ENCODE measurements at regions of chr2 and their contacts with region 1.

Region 1: DNA sequence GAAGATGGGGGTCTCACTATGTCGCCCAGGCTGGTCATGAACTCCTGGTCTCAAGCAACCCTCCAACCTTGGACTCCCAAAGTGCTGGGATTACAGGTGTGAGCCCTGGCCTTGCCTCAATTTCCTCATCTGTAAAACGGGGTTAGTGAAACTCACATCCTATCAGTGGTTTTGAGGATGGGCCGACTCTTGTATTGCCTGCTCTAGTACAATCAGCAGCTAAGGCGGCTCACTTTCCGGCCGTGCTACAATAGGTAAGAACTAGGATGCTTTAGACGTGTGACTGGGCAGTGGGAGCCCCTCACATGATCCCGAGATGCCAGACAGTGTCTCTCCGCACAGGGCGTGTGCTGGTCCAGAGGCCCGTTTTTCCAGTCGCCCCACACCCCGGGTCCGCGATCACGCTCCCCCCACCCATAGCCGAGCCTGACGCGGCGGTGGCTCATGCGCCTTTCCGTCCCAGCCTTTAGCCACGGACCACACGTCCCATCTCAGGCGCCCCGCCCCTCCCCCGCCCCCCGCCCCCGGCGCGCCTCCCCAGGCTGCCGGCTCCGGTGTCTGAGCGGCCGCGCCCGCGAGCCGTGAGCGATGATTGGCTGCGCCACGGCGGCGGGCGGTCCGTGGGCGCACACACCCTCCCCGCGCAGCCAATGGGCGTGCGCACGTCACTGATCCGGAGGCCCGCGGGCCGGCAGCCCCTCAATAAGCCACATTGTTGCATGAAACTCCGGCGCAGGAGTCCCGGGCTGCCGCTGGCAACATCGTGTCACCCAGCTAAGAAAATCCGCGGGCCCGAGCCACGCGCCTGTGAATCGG is at the start of gene HK2:
- DNase-seq: peak; percentile 95
- ATAC-seq: peak; percentile 98
- total RNA-seq, gene HK2: 5.4 TPM

Region 2: GRCh38 chr2:74690571-74690970 is 143.1 kb before region 1 on chr2:
- intact Hi-C with region 1: no loop called
- DNase-seq: no peak
- ATAC-seq: peak; percentile 69

Region 3: DNA sequence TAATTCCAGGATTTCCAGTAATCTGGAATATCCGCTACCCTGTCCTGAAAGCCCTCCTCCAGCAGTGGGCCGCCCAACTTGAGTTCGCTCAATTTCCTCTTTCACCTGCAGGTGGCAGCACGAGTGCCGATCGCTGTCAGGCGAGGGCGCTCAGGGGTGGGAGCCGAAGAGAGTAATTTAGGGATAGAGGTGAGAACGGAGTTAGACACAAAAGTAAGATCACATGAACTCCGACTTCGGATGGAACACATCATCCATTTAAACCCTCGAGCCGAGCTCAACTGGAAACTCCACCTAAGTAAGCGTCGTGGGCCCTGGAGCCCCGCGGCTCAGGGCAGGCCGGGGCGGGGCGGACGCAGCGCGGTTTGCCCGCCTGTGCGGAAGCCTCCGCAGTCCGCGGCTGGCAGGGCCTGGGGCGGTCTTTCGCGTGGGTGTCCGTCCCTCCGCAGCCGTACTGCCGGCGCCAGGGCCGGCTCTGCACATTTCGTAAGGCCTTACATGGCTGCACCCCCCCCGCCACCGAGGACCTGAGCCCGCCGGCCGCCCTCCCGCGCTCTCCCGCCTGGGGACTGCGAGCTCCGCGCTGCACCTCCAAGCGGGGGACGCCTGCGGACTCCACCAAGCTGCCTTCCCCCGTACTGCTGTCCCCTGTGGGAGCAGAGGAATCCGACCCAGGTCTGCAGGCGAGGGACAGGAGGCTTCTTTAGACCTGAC is 118.4 kb before region 1 on chr2:
- intact Hi-C with region 1: loop called (anchors 5 kb)
- DNase-seq: peak; percentile 90
- ATAC-seq: peak; percentile 92

Region 4: GRCh38 chr2:74779587-74780135 is 54.0 kb before region 1 on chr2:
- intact Hi-C with region 1: no loop called
- DNase-seq: no peak
- ATAC-seq: no peak

Region 5: GRCh38 chr2:74864846-74865722 is 31.5 kb after region 1 on chr2:
- intact Hi-C with region 1: loop called (anchors 2 kb)
- DNase-seq: no peak
- ATAC-seq: no peak

Measured in Right ventricle myocardium inferior (tissue), 1 donor.